ENCODE measurements at regions of chr1 and their contacts with region 1.

Region 1: GRCh38 chr1:87953732-87954344 is 625.2 kb downstream of the LMO4 start:
- DNase-seq: peak; percentile 79
- ATAC-seq: peak; percentile 71
- H3K4me3 ChIP-seq: no peak overlapping the region
- H3K27ac ChIP-seq: no peak overlapping the region
- H3K4me1 ChIP-seq: peaks cover 2% of the 10 kb centered on the region; the same call in 1 of the 2 replicates
- H3K27me3 ChIP-seq: no peaks in the 10 kb centered on the region
- CTCF ChIP-seq: peak; percentile 82
- POLR2A ChIP-seq: no peak
- RAD21 ChIP-seq: peak; percentile 77

Region 2: GRCh38 chr1:87151500-87152421 is 802.1 kb before region 1 on chr1:
- CTCF ChIA-PET with region 1: no interaction called
- POLR2A ChIA-PET with region 1: no interaction called
- dilution Hi-C with region 1: no loop called
- in situ Hi-C with region 1: no loop called
- intact Hi-C with region 1: loop called (anchors 5 kb)
- DNase-seq: peak; percentile 58
- ATAC-seq: peak; percentile 93
- H3K4me3 ChIP-seq: peak overlapping the region; percentile 21; the same call in 1 of the 2 replicates
- H3K27ac ChIP-seq: peak overlapping the region; percentile 36
- H3K4me1 ChIP-seq: peaks cover 17% of the 10 kb centered on the region; the same call in 1 of the 2 replicates
- H3K27me3 ChIP-seq: peaks cover 2% of the 10 kb centered on the region; the same call in 1 of the 2 replicates
- CTCF ChIP-seq: peak; percentile 69
- POLR2A ChIP-seq: no peak
- RAD21 ChIP-seq: peak; percentile 77

Region 3: GRCh38 chr1:87478231-87478630 is 475.6 kb before region 1 on chr1:
- CTCF ChIA-PET with region 1: no interaction called
- POLR2A ChIA-PET with region 1: no interaction called
- dilution Hi-C with region 1: no loop called
- in situ Hi-C with region 1: no loop called
- intact Hi-C with region 1: loop called (anchors 10 kb)
- DNase-seq: peak; percentile 34
- ATAC-seq: peak; percentile 57
- H3K4me3 ChIP-seq: no peak overlapping the region
- H3K27ac ChIP-seq: no peak overlapping the region
- H3K4me1 ChIP-seq: no peaks in the 10 kb centered on the region
- H3K27me3 ChIP-seq: no peaks in the 10 kb centered on the region
- CTCF ChIP-seq: no peak
- POLR2A ChIP-seq: no peak
- RAD21 ChIP-seq: no peak

Region 4: GRCh38 chr1:87513255-87513654 is 440.6 kb before region 1 on chr1:
- CTCF ChIA-PET with region 1: no interaction called
- POLR2A ChIA-PET with region 1: no interaction called
- dilution Hi-C with region 1: no loop called
- in situ Hi-C with region 1: no loop called
- intact Hi-C with region 1: loop called (anchors 10 kb)
- DNase-seq: peak; percentile 85
- ATAC-seq: peak; percentile 84
- H3K4me3 ChIP-seq: no peak overlapping the region
- H3K27ac ChIP-seq: peak overlapping the region; percentile 99
- H3K4me1 ChIP-seq: peaks cover 9% of the 10 kb centered on the region
- H3K27me3 ChIP-seq: no peaks in the 10 kb centered on the region
- CTCF ChIP-seq: no peak
- POLR2A ChIP-seq: no peak
- RAD21 ChIP-seq: no peak

Region 5: DNA sequence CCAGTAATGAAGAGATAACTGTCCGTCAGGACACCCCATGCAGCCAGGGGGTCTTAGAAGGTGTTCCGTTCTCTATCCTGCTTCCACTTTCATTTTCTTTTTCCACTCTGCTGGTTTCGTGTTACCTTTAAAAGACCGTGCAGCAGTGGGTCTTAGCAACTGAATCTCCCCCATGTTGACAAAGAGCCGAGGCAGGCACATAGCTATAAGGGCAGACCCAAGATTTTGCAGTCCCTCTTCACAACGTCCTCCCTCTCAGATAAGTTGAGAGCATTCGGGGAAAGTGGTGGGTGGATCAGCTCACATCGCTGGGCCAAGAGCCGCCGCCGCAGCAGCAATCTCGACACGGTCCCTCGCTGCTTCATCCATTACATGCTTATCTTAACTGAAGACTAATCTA is 269.6 kb before region 1 on chr1:
- CTCF ChIA-PET with region 1: interaction called, 4 read pairs
- POLR2A ChIA-PET with region 1: no interaction called
- dilution Hi-C with region 1: no loop called
- in situ Hi-C with region 1: loop called (anchors 10 kb)
- intact Hi-C with region 1: loop called (anchors 5 kb)
- DNase-seq: peak; percentile 57
- ATAC-seq: peak; percentile 56
- H3K4me3 ChIP-seq: peak overlapping the region; percentile 89
- H3K27ac ChIP-seq: peak overlapping the region; percentile 96
- H3K4me1 ChIP-seq: peaks cover 10% of the 10 kb centered on the region
- H3K27me3 ChIP-seq: no peaks in the 10 kb centered on the region
- CTCF ChIP-seq: no peak
- POLR2A ChIP-seq: no peak
- RAD21 ChIP-seq: no peak

Region 6: DNA sequence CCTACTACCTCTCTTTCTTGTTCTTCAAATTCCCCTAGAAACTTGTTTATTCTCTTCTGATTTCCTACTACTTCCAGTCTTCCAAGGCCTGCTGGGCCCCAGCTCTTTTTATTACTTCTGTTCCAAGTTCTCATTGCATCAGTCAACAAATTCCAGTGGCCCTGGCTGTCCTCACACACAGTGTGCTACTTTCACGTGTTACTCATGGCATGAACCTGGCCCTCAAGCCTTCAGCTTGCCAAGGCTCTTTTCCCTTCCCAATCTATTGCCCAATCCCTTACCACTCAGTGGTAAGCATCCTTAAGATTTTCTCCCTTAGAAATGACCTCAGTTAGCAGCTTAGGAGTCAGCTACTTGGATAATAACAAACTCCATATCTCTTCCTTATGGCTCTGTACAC is 11.7 kb before region 1 on chr1:
- CTCF ChIA-PET with region 1: interaction called, 12 read pairs
- POLR2A ChIA-PET with region 1: no interaction called
- dilution Hi-C with region 1: no loop called
- in situ Hi-C with region 1: no loop called
- intact Hi-C with region 1: no loop called
- DNase-seq: peak; percentile 35
- ATAC-seq: no peak
- H3K4me3 ChIP-seq: no peak overlapping the region
- H3K27ac ChIP-seq: no peak overlapping the region
- H3K4me1 ChIP-seq: no peaks in the 10 kb centered on the region
- H3K27me3 ChIP-seq: no peaks in the 10 kb centered on the region
- CTCF ChIP-seq: no peak
- POLR2A ChIP-seq: no peak
- RAD21 ChIP-seq: no peak

Region 7: GRCh38 chr1:88061492-88062177 is 107.8 kb after region 1 on chr1:
- CTCF ChIA-PET with region 1: no interaction called
- POLR2A ChIA-PET with region 1: no interaction called
- dilution Hi-C with region 1: no loop called
- in situ Hi-C with region 1: no loop called
- intact Hi-C with region 1: loop called (anchors 5 kb)
- DNase-seq: peak; percentile 70
- ATAC-seq: peak; percentile 96
- H3K4me3 ChIP-seq: no peak overlapping the region
- H3K27ac ChIP-seq: no peak overlapping the region
- H3K4me1 ChIP-seq: no peaks in the 10 kb centered on the region
- H3K27me3 ChIP-seq: no peaks in the 10 kb centered on the region
- CTCF ChIP-seq: peak; percentile 96
- POLR2A ChIP-seq: no peak
- RAD21 ChIP-seq: peak; percentile 82